ENCODE measurements at regions of chr12 and their contacts with region 1.

Region 1: GRCh38 chr12:89862511-89863179 is 154.0 kb upstream of the ATP2B1 start:
- DNase-seq: peak in 9 of 10 donors; percentile 12 to 73 (median 53)
- ATAC-seq: peak; percentile 24 to 35
- H3K4me3 Mint-ChIP-seq: peak overlapping the region; percentile 72 to 85 (median 80)
- H3K27ac Mint-ChIP-seq: peak overlapping the region; percentile 96 to 99 (median 98)
- H3K4me1 Mint-ChIP-seq: peaks cover 30 to 72% (median 50%) of the 10 kb centered on the region in 4 donors
- H3K27me3 Mint-ChIP-seq: no peaks in the 10 kb centered on the region

Region 2: DNA sequence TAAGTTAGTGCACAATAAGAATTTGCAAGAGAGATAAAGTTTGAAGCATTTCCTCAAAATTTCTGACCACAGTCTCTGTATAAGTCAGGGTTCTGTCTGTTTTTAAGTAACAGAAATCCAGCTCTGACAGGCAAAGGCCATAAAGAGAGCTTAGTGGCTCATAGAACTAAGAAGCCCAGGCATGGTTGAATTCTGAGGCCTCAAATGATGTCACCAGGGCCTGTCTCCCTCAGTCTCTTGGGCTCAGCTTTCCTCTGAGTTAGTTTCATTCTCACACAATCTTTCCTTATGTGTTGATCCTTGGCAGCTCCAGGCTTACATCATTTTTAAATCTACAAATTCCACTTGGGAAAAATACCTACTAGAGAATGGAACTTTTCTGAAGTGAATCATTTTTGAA is 19.4 kb after region 1 on chr12:
- POLR2A ChIA-PET with region 1: interaction called, 39 read pairs
- DNase-seq: peak in 1 of 10 donors; percentile 13
- ATAC-seq: peak; percentile 26 to 33
- H3K4me3 Mint-ChIP-seq: peak overlapping the region in 8 of 10 donors; percentile 13 to 81 (median 62)
- H3K27ac Mint-ChIP-seq: peak overlapping the region; percentile 92 to 98 (median 96)
- H3K4me1 Mint-ChIP-seq: peaks cover 15 to 66% (median 53%) of the 10 kb centered on the region in 4 donors
- H3K27me3 Mint-ChIP-seq: no peaks in the 10 kb centered on the region

Region 3: DNA sequence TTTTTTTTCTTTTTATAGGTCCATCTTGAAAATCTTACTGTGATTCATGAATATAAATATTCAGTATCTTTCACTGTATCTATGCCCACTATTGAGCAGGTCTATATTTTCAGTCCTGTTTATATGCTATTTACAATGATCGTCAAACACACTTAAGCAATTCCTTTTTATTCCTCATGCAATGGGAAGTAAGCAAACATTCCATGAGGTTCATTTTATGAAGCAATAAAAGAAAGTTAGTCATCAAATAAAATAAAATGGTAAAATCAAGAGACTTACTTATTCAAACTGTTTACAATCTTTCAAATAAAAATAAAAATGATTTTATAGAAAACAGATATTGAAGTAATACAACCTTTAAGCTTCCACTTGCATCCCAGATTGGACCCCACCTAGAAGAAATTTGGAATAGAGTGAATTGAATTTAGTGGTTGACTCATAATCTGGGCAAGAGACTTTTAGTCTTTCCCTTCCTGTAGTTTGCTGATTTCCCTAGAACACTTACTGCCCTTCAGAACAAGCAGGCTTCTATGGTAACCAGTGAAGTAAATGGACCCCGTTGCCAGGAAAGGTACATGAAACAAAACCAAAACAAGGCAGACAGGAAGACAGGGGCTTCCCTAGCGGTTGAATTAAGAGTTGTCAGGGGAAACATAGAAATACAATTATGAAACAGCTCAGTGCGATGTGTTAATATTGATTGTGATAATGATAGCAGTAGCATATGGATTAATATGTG is 87.0 kb after region 1 on chr12:
- POLR2A ChIA-PET with region 1: interaction called, 14 read pairs
- DNase-seq: peak in 9 of 10 donors; percentile 29 to 91 (median 78)
- ATAC-seq: peak; percentile 84 to 93
- H3K4me3 Mint-ChIP-seq: peak overlapping the region in 9 of 10 donors; percentile 13 to 80 (median 51)
- H3K27ac Mint-ChIP-seq: peak overlapping the region; percentile 77 to 96 (median 92)
- H3K4me1 Mint-ChIP-seq: peaks cover 12 to 55% (median 46%) of the 10 kb centered on the region in 4 donors
- H3K27me3 Mint-ChIP-seq: no peaks in the 10 kb centered on the region

Measured in naive thymus-derived CD8-positive, alpha-beta T cell (primary cell).